ENCODE measurements at regions of chr15 and their contacts with region 1.

Region 1: DNA sequence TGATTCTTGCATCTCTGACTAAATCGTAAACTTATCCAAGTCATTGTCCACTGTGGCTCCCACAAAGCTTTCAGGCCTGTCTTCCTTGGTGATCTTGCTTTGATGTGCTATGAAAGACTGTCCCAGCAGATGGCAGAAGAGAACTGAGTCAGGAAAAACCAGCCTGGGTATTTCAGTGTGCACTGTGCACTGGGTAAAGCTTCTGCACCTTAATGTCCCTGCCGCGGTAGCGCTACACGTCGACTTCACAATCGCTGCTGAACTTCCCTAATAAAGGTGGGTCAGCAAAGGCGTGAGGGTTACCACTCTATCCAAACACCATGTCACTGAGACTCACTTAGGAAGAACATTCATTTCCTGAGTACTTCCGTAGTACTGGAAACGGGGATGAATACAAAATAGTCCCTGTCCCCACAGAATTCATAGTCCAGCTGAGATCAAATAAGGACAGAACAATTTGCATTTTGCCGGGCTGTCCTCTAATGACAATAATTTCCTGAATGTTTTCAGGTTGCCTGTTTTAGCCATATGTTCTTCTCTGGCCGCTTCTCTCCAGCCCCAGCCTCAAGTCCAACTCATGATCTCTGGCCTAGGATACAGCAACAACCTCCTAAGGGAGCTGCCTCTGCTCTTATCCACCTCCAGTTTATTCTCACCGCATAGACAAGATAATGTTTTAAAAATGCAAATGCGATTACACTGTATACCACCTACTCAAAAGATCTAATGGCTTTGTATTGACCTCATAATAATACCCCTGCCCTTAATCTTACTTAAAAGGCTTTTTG is 83.6 kb upstream of the AKAP13 start:
- DNase-seq: peak; percentile 32 to 73
- ATAC-seq: peak; percentile 80 to 95 (median 92)
- H3K4me3 ChIP-seq: peak overlapping the region in 9 of 10 donors; percentile 10 to 46 (median 42)
- H3K27ac ChIP-seq: peak overlapping the region in 7 of 10 donors; percentile 7 to 39 (median 25)
- H3K4me1 ChIP-seq: peaks cover 0 to 15% (median 10%) of the 10 kb centered on the region in 9 donors
- H3K27me3 ChIP-seq: no peaks in the 10 kb centered on the region
- CTCF ChIP-seq: peak; percentile 49 to 85 (median 80)

Region 2: GRCh38 chr15:84929744-84930371 is 367.0 kb before region 1 on chr15:
- intact Hi-C with region 1: no loop called
- DNase-seq: no peak
- ATAC-seq: no peak
- H3K4me3 ChIP-seq: no peak overlapping the region
- H3K27ac ChIP-seq: no peak overlapping the region
- H3K4me1 ChIP-seq: peaks cover 0 to 19% (median 12%) of the 10 kb centered on the region in 9 donors
- H3K27me3 ChIP-seq: no peaks in the 10 kb centered on the region
- CTCF ChIP-seq: no peak

Region 3: DNA sequence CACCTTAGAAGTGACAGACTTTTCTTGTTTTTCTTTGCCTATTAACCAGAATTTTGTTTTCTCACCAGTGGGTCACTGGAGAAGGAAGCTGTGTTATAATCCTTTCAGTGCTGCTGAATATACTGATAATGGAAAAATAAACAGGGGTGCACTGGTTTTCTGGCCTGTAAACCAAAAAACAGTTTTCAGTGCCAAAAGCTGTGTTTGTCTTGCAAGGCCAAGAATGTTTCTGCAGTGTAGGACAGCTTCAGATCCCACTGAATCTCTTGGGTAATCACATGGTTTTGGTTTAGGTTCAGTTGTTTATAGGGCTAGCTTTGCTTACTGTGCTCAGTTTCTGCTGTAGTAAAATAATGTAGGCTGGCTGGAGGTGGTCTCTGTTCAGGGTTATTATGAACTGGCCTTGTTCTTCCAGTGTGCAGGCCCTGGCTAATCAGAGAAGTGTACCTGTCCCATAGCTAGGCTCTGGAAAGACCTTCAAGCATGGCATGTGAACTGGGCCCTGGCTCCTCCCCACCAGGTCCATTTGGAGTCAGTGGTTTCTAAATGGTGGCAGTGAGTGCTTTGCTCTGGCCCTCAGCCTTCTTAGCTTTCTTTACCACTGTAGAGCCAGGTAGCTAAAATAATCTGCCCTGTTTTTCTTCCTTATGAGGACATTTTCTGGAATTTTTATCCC is 296.5 kb before region 1 on chr15:
- intact Hi-C with region 1: no loop called
- DNase-seq: no peak
- ATAC-seq: peak in 7 of 8 donors; percentile 21 to 73 (median 53)
- H3K4me3 ChIP-seq: no peak overlapping the region
- H3K27ac ChIP-seq: peak overlapping the region in 8 of 10 donors; percentile 8 to 68 (median 44)
- H3K4me1 ChIP-seq: peaks cover 10 to 67% (median 61%) of the 10 kb centered on the region in 9 donors
- H3K27me3 ChIP-seq: no peaks in the 10 kb centered on the region
- CTCF ChIP-seq: no peak

Region 4: GRCh38 chr15:85330901-85331588 is 34.2 kb after region 1 on chr15:
- intact Hi-C with region 1: loop called in 1 of 10 experiments (anchors 2 kb)
- DNase-seq: peak; percentile 86 to 91
- ATAC-seq: peak; percentile 86 to 97 (median 94)
- H3K4me3 ChIP-seq: peak overlapping the region in 2 of 10 donors; percentile 3 to 54
- H3K27ac ChIP-seq: peak overlapping the region; percentile 75 to 95 (median 90)
- H3K4me1 ChIP-seq: peaks cover 16 to 64% (median 48%) of the 10 kb centered on the region in 9 donors
- H3K27me3 ChIP-seq: no peaks in the 10 kb centered on the region
- CTCF ChIP-seq: peak; percentile 56 to 91 (median 84)

Region 5: DNA sequence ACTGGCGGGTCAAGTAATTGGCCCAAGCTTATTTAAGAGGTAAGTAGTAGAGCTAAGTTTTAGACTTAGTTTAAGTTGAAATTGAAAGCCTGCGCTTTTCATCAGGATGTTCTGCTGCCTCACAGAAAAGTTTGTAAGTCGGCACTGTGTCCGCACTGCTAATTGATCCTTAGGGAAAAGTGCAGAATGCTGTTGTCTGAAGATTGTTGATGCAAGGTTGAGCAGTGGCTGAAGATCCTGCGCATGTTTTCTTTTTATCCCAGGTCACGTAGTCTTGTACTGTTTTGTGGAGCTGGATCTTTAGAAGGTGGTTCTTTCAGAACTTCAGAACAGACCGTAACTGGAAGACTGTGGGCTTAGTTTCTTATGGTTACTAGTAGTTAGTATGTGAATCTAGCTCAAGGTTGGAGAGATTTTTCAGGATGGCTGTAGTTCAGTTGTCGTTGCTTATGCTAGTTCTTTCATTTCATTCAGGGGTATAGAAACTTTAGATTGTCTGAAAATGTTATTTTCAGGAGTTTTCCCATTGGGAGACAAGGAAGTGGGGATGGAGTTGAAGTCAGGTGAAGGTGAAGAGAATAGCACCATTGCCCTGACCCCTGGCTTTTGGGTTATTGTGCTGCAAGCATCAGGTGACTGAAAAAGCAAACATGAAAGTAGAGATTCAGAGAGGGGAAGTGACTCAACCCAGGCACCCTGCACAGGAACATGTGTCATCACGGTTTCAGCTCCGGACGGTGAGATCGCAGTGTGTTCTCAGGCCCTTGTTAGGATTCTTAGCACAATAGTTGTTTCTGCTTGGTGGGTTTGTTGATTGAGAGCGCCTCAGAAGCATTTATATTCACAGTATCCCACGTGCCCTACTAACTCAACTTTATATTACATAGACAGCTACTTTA is 116.4 kb after region 1 on chr15:
- intact Hi-C with region 1: loop called in 5 of 10 experiments (anchors 5 to 10 kb)
- DNase-seq: peak; percentile 23 to 50
- ATAC-seq: peak; percentile 57 to 94 (median 80)
- H3K4me3 ChIP-seq: peak overlapping the region in 5 of 10 donors; percentile 9 to 31 (median 23)
- H3K27ac ChIP-seq: peak overlapping the region in 9 of 10 donors; percentile 7 to 78 (median 57)
- H3K4me1 ChIP-seq: peaks cover 3 to 86% (median 49%) of the 10 kb centered on the region in 9 donors
- H3K27me3 ChIP-seq: no peaks in the 10 kb centered on the region
- CTCF ChIP-seq: peak in 5 of 9 donors; percentile 13 to 30 (median 28)

Region 6: DNA sequence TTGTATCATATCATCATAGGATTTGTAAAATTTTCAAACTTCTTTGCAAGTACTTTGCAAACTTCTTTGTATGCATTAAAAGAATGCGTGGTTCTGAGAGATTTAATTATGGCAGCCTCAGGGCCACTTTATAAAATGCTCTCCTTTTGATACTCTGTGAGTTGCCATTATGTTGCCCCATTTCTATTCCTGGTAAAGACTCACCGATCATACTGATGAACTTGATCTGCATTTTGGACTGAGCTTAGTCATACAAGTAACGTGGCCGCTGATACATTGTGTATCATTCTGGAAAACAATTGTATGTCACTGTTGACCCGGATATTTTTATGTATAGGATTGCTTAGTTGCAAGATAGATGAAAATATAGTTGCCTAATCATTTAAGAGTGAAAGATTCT is 122.4 kb after region 1 on chr15:
- intact Hi-C with region 1: loop called in 5 of 10 experiments (anchors 5 to 10 kb)
- DNase-seq: no peak
- ATAC-seq: no peak
- H3K4me3 ChIP-seq: no peak overlapping the region
- H3K27ac ChIP-seq: no peak overlapping the region
- H3K4me1 ChIP-seq: peaks cover 4 to 92% (median 50%) of the 10 kb centered on the region in 9 donors
- H3K27me3 ChIP-seq: no peaks in the 10 kb centered on the region
- CTCF ChIP-seq: no peak

Region 7: DNA sequence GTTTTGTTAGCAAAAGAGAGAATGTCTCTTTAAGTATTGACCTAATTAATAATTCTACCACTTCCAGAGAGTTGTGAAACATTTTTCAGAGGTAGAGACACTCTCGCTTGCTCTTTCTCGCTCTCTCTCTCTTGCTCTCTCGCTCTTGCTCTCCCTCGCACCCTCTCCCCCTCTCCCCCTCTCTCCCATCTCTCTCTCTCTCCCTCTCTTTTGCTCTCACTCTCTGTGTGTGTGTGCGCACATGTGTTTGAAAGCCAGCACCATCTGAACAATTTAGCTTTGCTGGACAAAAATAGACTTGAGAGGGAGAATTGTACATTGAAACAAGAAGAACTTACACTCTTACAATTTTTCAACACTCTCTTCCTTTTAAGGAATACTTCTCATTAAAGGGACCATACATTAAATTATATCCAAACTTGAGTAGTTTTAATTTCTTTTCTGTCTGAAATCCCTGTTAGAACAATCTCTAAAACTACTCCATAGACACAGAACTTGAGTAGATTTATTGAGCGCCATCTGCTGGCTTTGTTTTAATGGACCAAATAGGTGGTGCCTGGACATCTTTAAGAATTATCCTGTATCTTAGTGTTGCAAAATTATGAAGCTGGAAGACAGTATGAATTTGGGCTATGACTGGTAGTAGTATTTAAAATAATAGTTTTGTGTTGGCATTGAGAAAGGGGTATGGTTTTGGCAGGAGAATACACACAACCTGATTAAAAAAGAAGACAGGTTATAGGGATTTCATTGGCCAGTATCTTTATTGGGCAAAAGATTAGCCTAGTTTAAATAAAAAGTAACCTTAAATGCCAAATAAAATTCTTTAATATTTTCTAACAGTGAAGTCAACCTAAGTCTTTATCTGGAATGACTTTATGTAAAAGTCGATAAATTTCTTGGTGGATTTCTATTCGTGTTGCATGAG is 208.2 kb after region 1 on chr15:
- intact Hi-C with region 1: loop called in 2 of 10 experiments (anchors 1 to 5 kb)
- DNase-seq: peak in 1 of 2 donors; percentile 72
- ATAC-seq: peak; percentile 35 to 68 (median 57)
- H3K4me3 ChIP-seq: no peak overlapping the region
- H3K27ac ChIP-seq: peak overlapping the region in 9 of 10 donors; percentile 9 to 90 (median 44)
- H3K4me1 ChIP-seq: peaks cover under 1 to 94% (median 39%) of the 10 kb centered on the region in 9 donors
- H3K27me3 ChIP-seq: no peaks in the 10 kb centered on the region
- CTCF ChIP-seq: peak; percentile 36 to 79 (median 63)

Region 8: DNA sequence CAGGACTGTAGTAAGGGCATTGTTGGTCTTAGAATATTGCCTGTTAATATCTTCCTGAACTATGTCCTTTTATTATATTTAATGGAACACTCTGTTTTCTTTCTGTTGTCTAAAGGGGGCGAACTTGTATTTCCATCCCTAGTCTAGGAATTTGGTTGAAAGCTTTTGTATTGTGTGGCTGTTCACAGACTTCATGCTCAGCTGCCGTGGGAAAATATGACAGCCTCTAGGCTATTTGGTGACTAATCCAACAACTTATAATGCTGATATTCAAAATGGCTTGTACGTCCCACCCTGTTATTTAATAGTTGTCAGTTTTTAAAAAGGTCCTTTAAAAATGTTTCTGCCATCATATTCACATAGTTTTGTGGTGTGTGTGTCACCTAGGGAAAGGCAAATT is 295.3 kb after region 1 on chr15:
- intact Hi-C with region 1: no loop called
- DNase-seq: no peak
- ATAC-seq: peak in 7 of 8 donors; percentile 62 to 80 (median 68)
- H3K4me3 ChIP-seq: no peak overlapping the region
- H3K27ac ChIP-seq: peak overlapping the region in 9 of 10 donors; percentile 20 to 72 (median 59)
- H3K4me1 ChIP-seq: peaks cover 9 to 96% (median 80%) of the 10 kb centered on the region in 9 donors
- H3K27me3 ChIP-seq: no peaks in the 10 kb centered on the region
- CTCF ChIP-seq: peak in 7 of 9 donors; percentile 15 to 61 (median 39)

Region 9: GRCh38 chr15:85707519-85708338 is 410.9 kb after region 1 on chr15:
- intact Hi-C with region 1: loop called in 1 of 10 experiments (anchors 10 kb)
- DNase-seq: peak in 1 of 2 donors; percentile 60
- ATAC-seq: peak in 7 of 8 donors; percentile 6 to 65 (median 54)
- H3K4me3 ChIP-seq: peak overlapping the region in 7 of 10 donors; percentile 1 to 35 (median 23)
- H3K27ac ChIP-seq: peak overlapping the region; percentile 81 to 91 (median 86)
- H3K4me1 ChIP-seq: peaks cover 38 to 76% (median 63%) of the 10 kb centered on the region in 9 donors
- H3K27me3 ChIP-seq: no peaks in the 10 kb centered on the region
- CTCF ChIP-seq: no peak

Region 10: GRCh38 chr15:85840065-85840801 is 543.4 kb after region 1 on chr15:
- intact Hi-C with region 1: loop called in 4 of 10 experiments (anchors 5 to 10 kb)
- DNase-seq: peak; percentile 77 to 85
- ATAC-seq: peak; percentile 89 to 95 (median 94)
- H3K4me3 ChIP-seq: peak overlapping the region in 8 of 10 donors; percentile 3 to 45 (median 38)
- H3K27ac ChIP-seq: no peak overlapping the region
- H3K4me1 ChIP-seq: peaks cover 0 to 16% (median 9%) of the 10 kb centered on the region in 9 donors
- H3K27me3 ChIP-seq: peaks cover 0 to 8% (median 3%) of the 10 kb centered on the region in 7 donors
- CTCF ChIP-seq: peak; percentile 82 to 98 (median 93)